ENCODE measurements at regions of chr11 and their contacts with region 1.

Region 1: GRCh38 chr11:304915-305843 is 2.4 kb upstream of the IFITM2 start:
- DNase-seq: peak; percentile 79
- ATAC-seq: no peak
- H3K4me3 Mint-ChIP-seq: no peak overlapping the region
- H3K27ac Mint-ChIP-seq: peak overlapping the region; percentile 1
- H3K4me1 Mint-ChIP-seq: peaks cover 20% of the 10 kb centered on the region
- H3K27me3 Mint-ChIP-seq: no peaks in the 10 kb centered on the region

Region 2: DNA sequence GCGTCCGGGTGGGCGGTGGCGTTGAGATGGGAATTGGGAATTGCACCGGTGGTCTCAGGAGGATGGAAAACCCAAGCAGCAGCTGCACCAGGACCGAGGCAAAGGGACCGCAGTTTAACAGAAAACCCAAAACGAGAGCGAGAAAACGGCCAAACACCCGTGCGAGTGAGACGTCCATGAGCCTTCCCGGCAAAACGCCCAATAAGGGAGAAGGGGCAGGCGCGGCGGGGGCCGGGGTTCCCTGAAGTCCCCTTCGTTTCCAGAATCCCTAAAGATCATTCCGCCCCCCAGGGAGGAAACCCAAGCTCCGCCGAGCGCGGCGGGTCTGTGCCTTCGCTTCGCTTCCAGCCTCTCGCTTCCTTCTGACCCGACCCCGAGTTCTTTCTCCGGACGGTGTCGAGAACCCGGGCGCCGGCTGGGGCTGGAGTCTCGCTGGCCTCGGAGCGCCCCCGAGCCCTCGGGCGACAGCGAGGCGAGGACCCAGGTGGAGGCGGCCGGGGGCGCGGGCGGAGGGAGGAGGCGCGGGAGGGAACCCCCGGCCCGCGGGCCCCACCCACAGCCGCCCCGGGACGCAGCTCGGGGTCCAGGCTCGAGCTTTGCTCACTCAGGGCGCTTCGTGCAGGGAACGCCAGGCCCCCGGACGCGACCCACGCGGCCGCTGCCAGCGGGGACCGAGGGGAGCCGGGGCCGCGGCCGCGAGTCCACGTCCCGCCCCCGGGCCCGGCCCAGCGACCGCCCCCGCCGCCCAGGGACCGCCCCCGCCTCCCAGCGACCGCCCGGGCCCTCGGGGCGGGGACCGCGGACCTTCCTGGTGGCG is 16.6 kb before region 1 on chr11 and contains the start of gene PGGHG:
- CTCF ChIA-PET with region 1: interaction called, 7 read pairs
- POLR2A ChIA-PET with region 1: no interaction called
- intact Hi-C with region 1: loop called in 1 of 2 experiments (anchors 1 kb)
- DNase-seq: peak; percentile 62
- ATAC-seq: peak; percentile 17
- H3K4me3 Mint-ChIP-seq: peak within 1 kb of the TSS; percentile 83
- H3K27ac Mint-ChIP-seq: peak within 1 kb of the TSS; percentile 92
- H3K4me1 Mint-ChIP-seq: peaks cover 29% of the 10 kb centered on the region
- H3K27me3 Mint-ChIP-seq: no peaks in the 10 kb centered on the region
- total RNA-seq, gene PGGHG: 73.4 to 82.3 TPM